A673 (cell line): ENCODE measurements at regions of chr7 and their contacts with region 1.

Region 1: DNA sequence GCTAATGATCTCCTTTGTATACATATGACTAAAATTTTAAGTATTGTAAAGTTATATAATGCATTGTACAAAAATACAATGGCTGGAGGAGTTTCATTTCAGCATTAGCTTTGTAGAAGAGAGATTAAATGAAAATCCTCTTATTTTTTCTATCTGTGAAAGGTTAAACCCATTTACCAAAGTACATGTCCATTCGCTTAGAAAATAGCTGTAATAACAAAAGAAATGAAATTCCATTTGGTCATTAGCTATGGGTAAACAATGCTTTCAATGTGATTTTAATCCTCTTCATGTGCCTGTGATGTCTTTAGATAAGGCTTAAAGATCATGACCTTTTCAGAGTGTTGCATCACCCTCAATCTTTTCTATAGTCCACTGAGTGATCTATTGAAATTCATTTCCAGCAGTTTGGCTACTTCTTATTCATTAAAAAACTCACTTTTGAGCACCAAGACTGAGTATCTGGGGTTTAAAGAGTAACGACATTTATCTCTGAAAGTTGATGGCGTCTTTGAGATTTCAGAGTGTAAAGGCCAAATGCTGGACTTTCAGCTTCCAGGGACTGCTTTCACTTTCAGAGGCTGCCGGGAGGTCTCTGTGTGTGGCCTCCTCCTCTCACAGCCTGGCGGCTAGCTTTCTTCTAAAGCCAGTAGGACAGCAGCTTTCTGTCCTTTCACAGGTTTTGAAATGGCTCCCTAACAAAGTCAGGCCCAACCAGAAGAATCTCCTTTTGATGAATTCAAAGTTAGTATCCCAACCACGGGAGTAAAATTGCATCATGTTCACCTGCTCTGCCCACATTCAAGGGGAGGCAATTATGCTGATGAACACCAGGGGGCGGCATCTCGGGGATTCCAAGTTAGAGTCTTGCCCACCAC is 701.4 kb upstream of the COBL start:
- DNase-seq: peak; percentile 1
- H3K4me3 ChIP-seq: no peak overlapping the region
- H3K27ac ChIP-seq: no peak overlapping the region
- H3K4me1 ChIP-seq: no peaks in the 10 kb centered on the region
- H3K27me3 ChIP-seq: no peaks in the 10 kb centered on the region
- CTCF ChIP-seq: 0 out of 2 replicates have a peak, but pooled peaks have one; percentile 30

Region 2: DNA sequence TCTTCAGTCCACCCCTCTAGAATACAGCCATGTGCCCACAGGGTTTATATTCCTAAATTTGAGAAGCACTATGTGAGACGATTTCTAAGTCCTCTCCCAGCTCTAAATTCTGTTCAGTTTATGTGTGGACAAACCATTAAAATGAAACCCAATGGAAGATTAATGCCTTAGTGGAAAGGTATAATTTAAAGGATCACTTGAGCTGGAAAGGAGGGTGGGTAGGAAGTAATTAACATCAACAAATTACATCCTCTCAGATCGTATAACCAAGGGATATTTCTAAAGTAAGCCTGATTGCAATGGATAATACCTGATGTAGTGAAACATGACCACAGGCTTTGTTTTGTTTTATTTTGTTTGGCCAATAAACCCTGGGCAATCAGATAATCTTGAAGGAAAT is 190.4 kb before region 1 on chr7:
- CTCF ChIA-PET with region 1: no interaction called
- POLR2A ChIA-PET with region 1: no interaction called
- intact Hi-C with region 1: no loop called
- DNase-seq: no peak
- H3K4me3 ChIP-seq: no peak overlapping the region
- H3K27ac ChIP-seq: no peak overlapping the region
- H3K4me1 ChIP-seq: no peaks in the 10 kb centered on the region
- H3K27me3 ChIP-seq: no peaks in the 10 kb centered on the region
- CTCF ChIP-seq: no peak

Region 3: GRCh38 chr7:51867117-51867516 is 150.9 kb before region 1 on chr7:
- CTCF ChIA-PET with region 1: no interaction called
- POLR2A ChIA-PET with region 1: no interaction called
- intact Hi-C with region 1: no loop called
- DNase-seq: no peak
- H3K4me3 ChIP-seq: no peak overlapping the region
- H3K27ac ChIP-seq: no peak overlapping the region
- H3K4me1 ChIP-seq: no peaks in the 10 kb centered on the region
- H3K27me3 ChIP-seq: no peaks in the 10 kb centered on the region
- CTCF ChIP-seq: no peak

Region 4: DNA sequence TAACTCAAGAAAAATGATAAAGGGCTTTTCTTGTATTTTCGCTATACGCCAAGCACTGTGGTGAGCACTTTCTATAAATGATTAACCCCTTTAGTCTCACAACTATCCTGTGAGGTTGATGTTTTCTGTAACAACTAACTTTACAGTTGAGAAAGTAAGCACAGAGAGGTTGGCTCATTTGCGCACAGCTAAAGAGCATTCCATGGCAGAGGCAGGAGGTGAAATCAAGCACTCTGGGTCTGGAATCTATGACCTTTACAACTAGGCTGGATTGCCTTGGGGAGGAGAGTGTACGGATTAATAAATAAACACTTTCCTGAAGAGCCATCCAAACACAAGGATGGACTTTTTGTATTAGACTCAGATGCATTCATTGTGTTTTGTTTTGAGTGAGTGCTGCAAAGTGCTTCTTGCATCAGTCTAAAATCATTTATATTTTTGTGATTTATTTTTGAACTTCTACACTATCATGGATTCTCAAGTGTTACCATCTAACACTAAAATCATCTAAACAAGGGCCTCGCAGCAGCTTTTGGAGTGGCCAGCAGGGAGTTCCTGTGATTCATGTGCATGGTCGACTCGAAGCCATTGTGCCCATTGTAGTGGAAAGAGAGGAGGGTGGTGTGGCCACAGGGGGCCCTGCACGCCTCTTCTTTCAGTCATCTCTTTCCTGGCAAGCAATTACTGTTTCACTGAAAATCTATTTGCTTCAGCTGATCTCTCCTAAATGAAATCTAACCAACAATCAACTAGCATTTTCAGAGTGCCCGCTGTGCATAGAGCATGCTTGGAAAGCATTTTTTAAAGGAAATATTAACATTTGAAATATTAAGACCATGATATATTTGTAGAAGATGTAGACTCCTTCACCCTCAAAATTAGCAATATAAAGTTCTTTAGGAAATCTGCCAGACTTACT is 68.1 kb before region 1 on chr7:
- CTCF ChIA-PET with region 1: no interaction called
- POLR2A ChIA-PET with region 1: no interaction called
- intact Hi-C with region 1: loop called (anchors 10 kb)
- DNase-seq: peak; percentile 2
- H3K4me3 ChIP-seq: no peak overlapping the region
- H3K27ac ChIP-seq: no peak overlapping the region
- H3K4me1 ChIP-seq: no peaks in the 10 kb centered on the region
- H3K27me3 ChIP-seq: no peaks in the 10 kb centered on the region
- CTCF ChIP-seq: no peak